Panc1 (cell line): ENCODE measurements at regions of chr1 and their contacts with region 1.

Region 1: GRCh38 chr1:55140546-55140983 is 74.6 kb downstream of the USP24 start:
- DNase-seq: peak; percentile 56
- ATAC-seq: peak; percentile 96
- H3K4me3 ChIP-seq: no peak overlapping the region
- H3K27ac ChIP-seq: no peak overlapping the region
- H3K4me1 ChIP-seq: no peaks in the 10 kb centered on the region; the same call in 1 of the 2 replicates
- H3K27me3 ChIP-seq: no peaks in the 10 kb centered on the region
- CTCF ChIP-seq: peak; percentile 83

Region 2: GRCh38 chr1:55215256-55216021 is 74.9 kb after region 1 on chr1 and contains the start of gene USP24:
- CTCF ChIA-PET with region 1: no interaction called
- POLR2A ChIA-PET with region 1: no interaction called
- in situ Hi-C with region 1: no loop called
- intact Hi-C with region 1: loop called (anchors 5 kb)
- DNase-seq: no peak
- ATAC-seq: peak; percentile 90
- H3K4me3 ChIP-seq: peak within 1 kb of the TSS; percentile 69 to 86
- H3K27ac ChIP-seq: peak within 1 kb of the TSS; percentile 97
- H3K4me1 ChIP-seq: peaks cover 37% of the 10 kb centered on the region
- H3K27me3 ChIP-seq: no peaks in the 10 kb centered on the region
- CTCF ChIP-seq: no peak
- total RNA-seq, gene USP24: 52.2 TPM

Region 3: GRCh38 chr1:55277377-55278130 is 137.0 kb after region 1 on chr1:
- CTCF ChIA-PET with region 1: interaction called, 7 read pairs
- POLR2A ChIA-PET with region 1: no interaction called
- in situ Hi-C with region 1: no loop called
- intact Hi-C with region 1: loop called (anchors 1 kb)
- DNase-seq: peak; percentile 61
- ATAC-seq: peak; percentile 98
- H3K4me3 ChIP-seq: no peak overlapping the region
- H3K27ac ChIP-seq: no peak overlapping the region
- H3K4me1 ChIP-seq: peaks cover 6% of the 10 kb centered on the region; the same call in 1 of the 2 replicates
- H3K27me3 ChIP-seq: no peaks in the 10 kb centered on the region
- CTCF ChIP-seq: peak; percentile 91

Region 4: GRCh38 chr1:56584910-56585528 is 1444.5 kb after region 1 on chr1:
- CTCF ChIA-PET with region 1: no interaction called
- POLR2A ChIA-PET with region 1: no interaction called
- in situ Hi-C with region 1: no loop called
- intact Hi-C with region 1: loop called (anchors 5 kb)
- DNase-seq: no peak
- ATAC-seq: peak; percentile 83
- H3K4me3 ChIP-seq: no peak overlapping the region
- H3K27ac ChIP-seq: no peak overlapping the region
- H3K4me1 ChIP-seq: 0 out of 2 replicates have a peak, but pooled peaks cover 2% of the 10 kb centered on the region
- H3K27me3 ChIP-seq: no peaks in the 10 kb centered on the region
- CTCF ChIP-seq: peak; percentile 78; the same call in 1 of the 2 replicates